Dendritic cell treated with granulocyte-macrophage colony-stimulating factor and Interleukin-4, amounts not matched to agents 40 ng/mL and 50 ng/mL, for 4 days (primary cell): ENCODE measurements at regions of chr2 and their contacts with region 1.

Region 1: DNA sequence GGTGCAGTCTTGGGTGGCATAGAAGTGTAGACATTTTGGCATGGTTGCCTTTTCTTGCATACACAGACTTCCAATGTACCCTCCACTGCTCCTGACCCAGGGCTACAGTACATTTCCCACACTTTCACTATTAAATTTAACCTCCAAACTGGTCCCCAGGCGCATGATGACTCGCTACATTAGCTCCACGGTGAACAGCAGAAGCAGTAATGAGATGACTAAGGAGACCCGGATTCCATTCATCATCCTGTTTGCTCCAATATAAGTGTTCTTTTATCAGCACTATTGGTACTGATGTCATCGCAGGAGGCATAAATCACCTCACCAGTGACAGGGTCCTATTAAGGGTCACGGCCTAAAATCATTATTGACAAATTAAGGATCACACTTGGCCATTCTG is 316.5 kb downstream of the EN1 start:
- H3K4me3 Mint-ChIP-seq: no peak overlapping the region
- H3K27ac Mint-ChIP-seq: no peak overlapping the region
- H3K4me1 Mint-ChIP-seq: peaks cover 9% of the 10 kb centered on the region
- H3K27me3 Mint-ChIP-seq: peaks cover 2% of the 10 kb centered on the region

Region 2: DNA sequence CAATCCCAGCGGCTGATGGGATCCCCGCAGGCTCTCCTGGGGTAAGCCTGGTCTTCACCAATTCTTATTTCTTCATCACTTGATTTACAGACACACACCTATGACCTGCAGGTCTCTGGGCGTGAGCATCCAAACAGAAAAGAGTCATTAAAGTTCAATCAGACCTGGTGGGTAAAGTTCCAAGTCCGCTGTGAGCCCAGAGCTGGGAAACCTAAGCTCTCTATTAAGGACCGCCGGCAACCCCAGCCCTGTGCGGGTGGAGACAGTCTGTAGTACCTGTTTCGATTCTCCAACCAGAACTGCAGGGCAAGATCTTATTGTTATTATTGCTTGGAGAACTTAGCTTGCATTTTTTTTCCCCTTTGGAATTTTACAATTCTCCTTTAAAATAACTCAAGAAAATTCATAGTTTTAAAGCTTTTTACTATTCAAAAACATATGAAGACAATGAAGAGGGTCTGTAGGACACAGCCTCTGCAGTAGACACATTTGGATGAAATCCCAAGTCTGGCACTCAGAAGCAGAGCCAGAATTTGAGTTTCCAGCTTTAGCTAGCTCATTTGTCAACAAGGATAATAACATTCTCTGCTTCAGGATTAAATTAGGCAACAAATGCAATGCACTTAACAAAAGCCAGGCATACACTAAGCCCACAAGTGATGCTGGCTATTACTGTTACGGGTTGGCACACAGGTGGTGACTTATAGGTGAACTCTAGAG is 66.3 kb before region 1 on chr2:
- intact Hi-C with region 1: no loop called
- H3K4me3 Mint-ChIP-seq: no peak overlapping the region
- H3K27ac Mint-ChIP-seq: no peak overlapping the region
- H3K4me1 Mint-ChIP-seq: no peaks in the 10 kb centered on the region
- H3K27me3 Mint-ChIP-seq: peaks cover 1% of the 10 kb centered on the region

Region 3: DNA sequence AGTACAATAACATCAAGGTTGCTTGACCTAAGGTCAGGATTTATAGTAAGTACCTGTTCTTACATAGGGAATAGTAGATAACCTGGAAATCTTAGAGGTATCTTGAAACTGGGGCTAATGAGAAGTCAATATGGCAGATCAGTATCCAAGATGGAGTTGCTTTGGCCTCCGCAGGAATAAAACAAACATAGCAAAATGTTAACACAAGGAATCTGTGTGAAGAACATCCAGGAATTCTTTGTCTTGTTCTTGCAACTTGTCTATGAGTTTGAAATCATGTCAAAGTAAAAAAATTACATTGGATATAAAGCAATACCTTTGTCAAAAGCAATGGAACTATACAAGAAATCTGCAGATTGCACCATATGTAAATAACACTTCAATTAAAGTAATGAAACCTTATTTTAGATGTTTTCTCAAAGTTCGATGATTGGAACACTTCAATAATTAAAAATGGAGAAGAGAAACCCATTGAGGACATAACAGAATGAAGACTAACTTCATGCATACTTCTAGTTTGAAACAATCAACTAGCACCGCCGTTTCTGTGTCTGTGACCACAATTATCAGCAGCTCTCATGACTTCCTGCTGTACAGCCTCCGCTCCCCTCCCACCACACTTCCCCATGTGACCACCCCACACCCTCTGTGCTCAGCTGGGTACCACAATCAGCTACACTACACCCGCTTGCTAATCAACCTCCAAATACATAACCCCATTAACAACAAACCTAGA is 808.0 kb after region 1 on chr2:
- intact Hi-C with region 1: loop called (anchors 5 kb)
- H3K4me3 Mint-ChIP-seq: peak overlapping the region; percentile 35
- H3K27ac Mint-ChIP-seq: peak overlapping the region; percentile 30
- H3K4me1 Mint-ChIP-seq: peaks cover 21% of the 10 kb centered on the region
- H3K27me3 Mint-ChIP-seq: no peaks in the 10 kb centered on the region